Transverse colon (tissue), 4 donors: ENCODE measurements at regions of chr1 and their contacts with region 1.

Region 1: DNA sequence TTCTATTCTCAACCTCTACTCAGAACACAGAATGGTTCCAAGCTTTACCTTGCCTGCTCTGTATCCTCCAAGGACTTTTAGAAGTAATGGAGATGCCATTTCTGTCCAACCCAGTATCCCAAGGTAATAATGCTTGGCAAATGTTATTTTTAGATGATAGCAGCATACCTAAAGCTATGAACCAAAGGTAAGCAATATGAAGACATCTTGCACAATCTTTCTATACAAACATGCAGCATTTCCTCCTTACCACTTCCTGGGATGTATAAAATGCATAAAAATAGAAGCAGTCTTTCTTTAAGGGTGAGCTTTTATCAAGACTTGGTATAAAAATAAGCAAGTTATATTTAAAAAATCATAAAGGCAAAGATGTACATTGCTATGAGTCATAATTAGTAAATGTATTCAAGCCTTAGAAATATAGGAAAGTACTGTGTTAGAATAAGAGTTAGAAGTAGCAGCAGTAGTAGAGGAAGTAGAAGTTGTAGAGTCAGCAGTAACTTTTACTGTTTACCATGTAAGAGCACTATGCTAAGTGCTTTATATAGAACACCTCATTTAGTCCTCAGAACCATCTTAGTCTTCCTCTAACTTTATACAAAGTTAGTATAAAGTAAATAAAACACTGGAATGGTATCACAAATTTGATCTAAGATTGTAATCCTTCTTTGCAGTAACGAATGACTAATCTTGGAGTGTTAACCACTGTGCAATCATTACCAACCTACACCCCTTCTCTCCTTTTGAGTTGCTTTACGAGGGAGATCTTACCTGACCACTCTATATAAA is 371.4 kb downstream of the VAV3 start:
- DNase-seq: no peak
- H3K4me3 ChIP-seq: no peak overlapping the region
- H3K27ac ChIP-seq: peak overlapping the region; percentile 35 to 59 (median 50)
- H3K4me1 ChIP-seq: peaks cover 0 to 51% (median 18%) of the 10 kb centered on the region in 4 donors
- H3K27me3 ChIP-seq: no peaks in the 10 kb centered on the region
- CTCF ChIP-seq: no peak
- EP300 ChIP-seq: no peak
- POLR2A ChIP-seq: no peak

Region 2: GRCh38 chr1:107559881-107560280 is 33.7 kb before region 1 on chr1:
- in situ Hi-C with region 1: no loop called
- intact Hi-C with region 1: loop called (anchors 2 kb)
- DNase-seq: no peak
- H3K4me3 ChIP-seq: no peak overlapping the region
- H3K27ac ChIP-seq: no peak overlapping the region
- H3K4me1 ChIP-seq: no peaks in the 10 kb centered on the region
- H3K27me3 ChIP-seq: no peaks in the 10 kb centered on the region
- CTCF ChIP-seq: no peak
- EP300 ChIP-seq: no peak
- POLR2A ChIP-seq: no peak

Region 3: GRCh38 chr1:107820805-107821204 is 227.2 kb after region 1 on chr1:
- in situ Hi-C with region 1: no loop called
- intact Hi-C with region 1: no loop called
- DNase-seq: no peak
- H3K4me3 ChIP-seq: no peak overlapping the region
- H3K27ac ChIP-seq: no peak overlapping the region
- H3K4me1 ChIP-seq: no peaks in the 10 kb centered on the region
- H3K27me3 ChIP-seq: no peaks in the 10 kb centered on the region
- CTCF ChIP-seq: no peak
- EP300 ChIP-seq: no peak
- POLR2A ChIP-seq: no peak